T-cell (primary cell): ENCODE measurements at regions of chr17 and their contacts with region 1.

Region 1: GRCh38 chr17:63478791-63479494 is 2.1 kb downstream of the ACE start:
- DNase-seq: peak; percentile 33 to 83 (median 71)
- ATAC-seq: peak; percentile 66 to 83 (median 68)
- H3K4me3 ChIP-seq: no peak overlapping the region
- H3K4me3 Mint-ChIP-seq: peak overlapping the region; percentile 47 to 67 (median 59)
- H3K27ac ChIP-seq: no peak overlapping the region
- H3K27ac Mint-ChIP-seq: no peak overlapping the region
- H3K4me1 ChIP-seq: peaks cover 4 to 27% of the 10 kb centered on the region in 2 experiments
- H3K4me1 Mint-ChIP-seq: peaks cover 4 to 18% (median 11%) of the 10 kb centered on the region in 3 donors
- H3K27me3 ChIP-seq: peaks cover 2 to 59% of the 10 kb centered on the region in 2 experiments
- H3K27me3 Mint-ChIP-seq: peaks cover 5 to 15% of the 10 kb centered on the region in 2 donors

Region 2: DNA sequence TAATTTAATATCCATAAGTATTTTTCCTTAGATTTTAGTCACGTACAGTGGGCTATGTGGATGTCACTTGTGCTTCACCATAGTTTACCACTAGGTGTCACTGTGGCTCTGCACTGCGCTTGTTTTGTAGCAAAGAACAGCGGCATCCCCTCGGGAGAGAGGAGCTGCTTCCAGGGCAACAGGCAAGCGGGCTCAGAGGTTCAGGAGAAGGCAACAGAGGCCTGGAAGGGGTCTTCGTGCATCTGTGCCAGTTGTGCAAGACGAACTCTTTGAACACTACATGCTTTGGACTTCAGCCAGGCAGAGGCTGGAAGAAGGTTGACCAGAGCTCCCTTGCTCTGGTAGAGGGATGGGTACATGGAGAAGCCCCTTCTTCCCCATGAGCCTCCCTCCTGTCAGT is 53.5 kb before region 1 on chr17:
- CTCF ChIA-PET with region 1: interaction called, 30 to 59 read pairs
- POLR2A ChIA-PET with region 1: no interaction called
- DNase-seq: peak; percentile 28 to 88 (median 55)
- ATAC-seq: peak; percentile 68 to 80 (median 71)
- H3K4me3 ChIP-seq: no peak overlapping the region
- H3K4me3 Mint-ChIP-seq: no peak overlapping the region
- H3K27ac ChIP-seq: no peak overlapping the region
- H3K27ac Mint-ChIP-seq: no peak overlapping the region
- H3K4me1 ChIP-seq: peaks cover 14 to 46% of the 10 kb centered on the region in 2 experiments
- H3K4me1 Mint-ChIP-seq: peaks cover 31 to 46% (median 35%) of the 10 kb centered on the region in 3 donors
- H3K27me3 ChIP-seq: no peaks in the 10 kb centered on the region
- H3K27me3 Mint-ChIP-seq: no peaks in the 10 kb centered on the region